Naive thymus-derived CD4-positive, alpha-beta T cell (primary cell): ENCODE measurements at regions of chr16 and their contacts with region 1.

Region 1: GRCh38 chr16:23803591-23804123 is 32.1 kb upstream of the PRKCB start:
- DNase-seq: peak; percentile 39 to 71 (median 60)
- ATAC-seq: peak; percentile 94
- H3K4me3 ChIP-seq: no peak overlapping the region
- H3K4me3 Mint-ChIP-seq: peak overlapping the region in 9 of 10 donors; percentile 1 to 57 (median 19)
- H3K27ac ChIP-seq: no peak overlapping the region
- H3K27ac Mint-ChIP-seq: peak overlapping the region in 1 of 9 donors; percentile 7
- H3K4me1 ChIP-seq: peaks cover 0 to 7% of the 10 kb centered on the region in 2 donors
- H3K4me1 Mint-ChIP-seq: peaks cover 6 to 13% (median 11%) of the 10 kb centered on the region in 7 donors
- H3K27me3 ChIP-seq: no peaks in the 10 kb centered on the region
- H3K27me3 Mint-ChIP-seq: peaks cover 0 to 11% (median 0%) of the 10 kb centered on the region in 5 donors

Region 2: GRCh38 chr16:23826528-23827045 is 22.9 kb after region 1 on chr16:
- CTCF ChIA-PET with region 1: interaction called, 12 read pairs
- POLR2A ChIA-PET with region 1: no interaction called
- intact Hi-C with region 1: loop called in 1 of 2 experiments (anchors 1 kb)
- DNase-seq: peak in 7 of 9 donors; percentile 48 to 76 (median 62)
- ATAC-seq: peak; percentile 94
- H3K4me3 ChIP-seq: peak overlapping the region; percentile 8
- H3K4me3 Mint-ChIP-seq: peak overlapping the region; percentile 35 to 87 (median 69)
- H3K27ac ChIP-seq: peak overlapping the region; percentile 31
- H3K27ac Mint-ChIP-seq: peak overlapping the region; percentile 54 to 94 (median 88)
- H3K4me1 ChIP-seq: peaks cover 22 to 23% of the 10 kb centered on the region in 2 donors
- H3K4me1 Mint-ChIP-seq: peaks cover 31 to 44% (median 35%) of the 10 kb centered on the region in 7 donors
- H3K27me3 ChIP-seq: no peaks in the 10 kb centered on the region
- H3K27me3 Mint-ChIP-seq: peaks cover 0 to 3% (median 0%) of the 10 kb centered on the region in 5 donors

Region 3: GRCh38 chr16:23863511-23864422 is 60.1 kb after region 1 on chr16:
- CTCF ChIA-PET with region 1: interaction called, 3 read pairs
- POLR2A ChIA-PET with region 1: interaction called, 3 read pairs
- intact Hi-C with region 1: loop called in 1 of 2 experiments (anchors 1 kb)
- DNase-seq: peak in 7 of 9 donors; percentile 24 to 70 (median 67)
- ATAC-seq: peak; percentile 92
- H3K4me3 ChIP-seq: peak overlapping the region; percentile 59
- H3K4me3 Mint-ChIP-seq: peak overlapping the region; percentile 84 to 92 (median 89)
- H3K27ac ChIP-seq: peak overlapping the region; percentile 61
- H3K27ac Mint-ChIP-seq: peak overlapping the region; percentile 87 to 95 (median 93)
- H3K4me1 ChIP-seq: peaks cover 43 to 69% of the 10 kb centered on the region in 2 donors
- H3K4me1 Mint-ChIP-seq: peaks cover 63 to 96% (median 87%) of the 10 kb centered on the region in 7 donors
- H3K27me3 ChIP-seq: no peaks in the 10 kb centered on the region
- H3K27me3 Mint-ChIP-seq: no peaks in the 10 kb centered on the region

Region 4: GRCh38 chr16:23952128-23952970 is 148.7 kb after region 1 on chr16:
- CTCF ChIA-PET with region 1: interaction called, 5 read pairs
- POLR2A ChIA-PET with region 1: no interaction called
- intact Hi-C with region 1: loop called in 1 of 2 experiments (anchors 1 kb)
- DNase-seq: peak in 3 of 9 donors; percentile 16 to 22 (median 17)
- ATAC-seq: peak; percentile 24
- H3K4me3 ChIP-seq: peak overlapping the region; percentile 14
- H3K4me3 Mint-ChIP-seq: peak overlapping the region; percentile 19 to 82 (median 72)
- H3K27ac ChIP-seq: peak overlapping the region; percentile 46
- H3K27ac Mint-ChIP-seq: peak overlapping the region; percentile 30 to 99 (median 91)
- H3K4me1 ChIP-seq: peaks cover 52 to 67% of the 10 kb centered on the region in 2 donors
- H3K4me1 Mint-ChIP-seq: peaks cover 68 to 95% (median 91%) of the 10 kb centered on the region in 7 donors
- H3K27me3 ChIP-seq: no peaks in the 10 kb centered on the region
- H3K27me3 Mint-ChIP-seq: no peaks in the 10 kb centered on the region

Region 5: GRCh38 chr16:24036614-24037013 is 233.0 kb after region 1 on chr16:
- CTCF ChIA-PET with region 1: interaction called, 138 read pairs
- POLR2A ChIA-PET with region 1: interaction called, 6 read pairs
- intact Hi-C with region 1: loop called (anchors 1 kb)
- DNase-seq: peak in 8 of 9 donors; percentile 11 to 62 (median 30)
- ATAC-seq: peak; percentile 55
- H3K4me3 ChIP-seq: no peak overlapping the region
- H3K4me3 Mint-ChIP-seq: peak overlapping the region in 4 of 10 donors; percentile 18 to 92 (median 49)
- H3K27ac ChIP-seq: no peak overlapping the region
- H3K27ac Mint-ChIP-seq: peak overlapping the region in 4 of 9 donors; percentile 19 to 92 (median 54)
- H3K4me1 ChIP-seq: peaks cover 14 to 38% of the 10 kb centered on the region in 2 donors
- H3K4me1 Mint-ChIP-seq: peaks cover 27 to 51% (median 45%) of the 10 kb centered on the region in 7 donors
- H3K27me3 ChIP-seq: no peaks in the 10 kb centered on the region
- H3K27me3 Mint-ChIP-seq: no peaks in the 10 kb centered on the region

Region 6: GRCh38 chr16:24253192-24253591 is 449.5 kb after region 1 on chr16:
- CTCF ChIA-PET with region 1: interaction called, 3 read pairs
- POLR2A ChIA-PET with region 1: no interaction called
- intact Hi-C with region 1: loop called in 1 of 2 experiments (anchors 5 kb)
- DNase-seq: peak in 8 of 9 donors; percentile 10 to 55 (median 39)
- ATAC-seq: peak; percentile 64
- H3K4me3 ChIP-seq: no peak overlapping the region
- H3K4me3 Mint-ChIP-seq: no peak overlapping the region
- H3K27ac ChIP-seq: no peak overlapping the region
- H3K27ac Mint-ChIP-seq: no peak overlapping the region
- H3K4me1 ChIP-seq: no peaks in the 10 kb centered on the region
- H3K4me1 Mint-ChIP-seq: peaks cover 0 to 3% (median 0%) of the 10 kb centered on the region in 7 donors
- H3K27me3 ChIP-seq: peaks cover 5 to 16% of the 10 kb centered on the region in 2 donors
- H3K27me3 Mint-ChIP-seq: peaks cover 46 to 64% (median 52%) of the 10 kb centered on the region in 5 donors